MCF 10A (cell line): ENCODE measurements at regions of chr7 and their contacts with region 1.

Region 1: DNA sequence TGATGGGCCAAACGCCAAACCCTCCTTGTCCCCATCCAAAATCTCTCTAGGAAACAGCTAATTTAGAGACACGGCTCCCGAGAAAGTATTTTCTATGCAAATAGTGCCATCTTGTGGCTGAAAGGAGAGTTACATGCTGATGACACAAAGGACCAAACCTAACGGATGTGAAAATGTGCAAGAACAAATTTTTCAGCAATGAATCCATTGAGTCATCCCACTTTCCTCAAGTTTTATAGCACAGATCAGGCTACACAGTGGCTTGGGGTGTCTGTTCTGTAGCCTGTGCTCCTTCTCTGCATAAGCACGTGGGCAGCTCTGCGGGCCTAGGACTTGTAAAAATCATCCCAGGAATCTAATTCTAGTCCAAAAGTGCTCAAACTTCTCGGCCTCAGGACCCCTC is 154.8 kb upstream of the PRR15 start:
- DNase-seq: peak; percentile 83
- H3K4me3 Mint-ChIP-seq: no peak overlapping the region
- H3K27ac Mint-ChIP-seq: no peak overlapping the region
- H3K4me1 Mint-ChIP-seq: peaks cover 10% of the 10 kb centered on the region
- H3K27me3 Mint-ChIP-seq: no peaks in the 10 kb centered on the region
- CTCF ChIP-seq: peak; percentile 64

Region 2: DNA sequence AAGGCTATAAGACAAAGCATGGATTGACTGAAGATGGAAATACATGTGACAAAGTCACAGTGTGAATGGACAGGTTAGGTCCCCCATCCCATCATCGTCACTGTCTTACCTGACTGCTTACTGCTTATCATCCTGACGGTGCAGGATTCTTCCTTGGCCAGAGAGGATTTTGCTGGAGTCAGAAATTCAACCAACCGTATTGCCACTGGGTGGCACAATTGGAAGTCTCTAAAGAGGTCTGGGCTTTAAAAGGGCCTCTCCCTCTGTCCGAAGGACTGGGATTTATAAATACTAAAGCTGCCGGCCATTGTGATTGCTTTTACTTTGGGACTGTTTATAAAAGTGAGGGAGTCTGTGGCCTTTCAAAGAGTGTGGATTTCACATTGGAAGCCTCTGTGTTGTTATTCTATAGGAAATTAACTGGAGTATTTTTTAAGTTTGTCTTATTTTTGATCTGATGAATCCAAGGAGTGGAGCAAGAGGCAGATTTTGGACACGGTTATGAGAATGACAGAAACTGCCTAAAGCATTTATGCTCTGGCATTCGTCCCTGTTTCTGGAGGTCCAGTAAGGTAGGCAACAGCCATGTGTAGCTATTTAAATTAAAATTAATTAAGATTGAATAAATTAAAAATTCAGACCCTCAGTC is 1109.8 kb before region 1 on chr7:
- CTCF ChIA-PET with region 1: no interaction called
- POLR2A ChIA-PET with region 1: no interaction called
- intact Hi-C with region 1: loop called (anchors 5 kb)
- DNase-seq: peak; percentile 78
- H3K4me3 Mint-ChIP-seq: no peak overlapping the region
- H3K27ac Mint-ChIP-seq: no peak overlapping the region
- H3K4me1 Mint-ChIP-seq: peaks cover 9% of the 10 kb centered on the region
- H3K27me3 Mint-ChIP-seq: no peaks in the 10 kb centered on the region
- CTCF ChIP-seq: peak; percentile 48

Region 3: GRCh38 chr7:28926871-28927597 is 481.8 kb before region 1 on chr7:
- CTCF ChIA-PET with region 1: interaction called, 230 read pairs
- POLR2A ChIA-PET with region 1: interaction called, 10 read pairs
- intact Hi-C with region 1: loop called (anchors 1 kb)
- DNase-seq: peak; percentile 90
- H3K4me3 Mint-ChIP-seq: peak overlapping the region; percentile 86
- H3K27ac Mint-ChIP-seq: peak overlapping the region; percentile 55
- H3K4me1 Mint-ChIP-seq: peaks cover 7% of the 10 kb centered on the region
- H3K27me3 Mint-ChIP-seq: no peaks in the 10 kb centered on the region
- CTCF ChIP-seq: peak; percentile 68

Region 4: GRCh38 chr7:29113384-29114103 is 295.3 kb before region 1 on chr7:
- CTCF ChIA-PET with region 1: interaction called, 48 read pairs
- POLR2A ChIA-PET with region 1: interaction called, 7 read pairs
- intact Hi-C with region 1: loop called (anchors 1 kb)
- DNase-seq: peak; percentile 82
- H3K4me3 Mint-ChIP-seq: peak overlapping the region; percentile 68
- H3K27ac Mint-ChIP-seq: peak overlapping the region; percentile 84
- H3K4me1 Mint-ChIP-seq: peaks cover 51% of the 10 kb centered on the region
- H3K27me3 Mint-ChIP-seq: no peaks in the 10 kb centered on the region
- CTCF ChIP-seq: peak; percentile 40

Region 5: GRCh38 chr7:29163854-29164253 is 245.0 kb before region 1 on chr7:
- CTCF ChIA-PET with region 1: no interaction called
- POLR2A ChIA-PET with region 1: no interaction called
- intact Hi-C with region 1: no loop called
- DNase-seq: no peak
- H3K4me3 Mint-ChIP-seq: no peak overlapping the region
- H3K27ac Mint-ChIP-seq: no peak overlapping the region
- H3K4me1 Mint-ChIP-seq: no peaks in the 10 kb centered on the region
- H3K27me3 Mint-ChIP-seq: no peaks in the 10 kb centered on the region
- CTCF ChIP-seq: no peak

Region 6: DNA sequence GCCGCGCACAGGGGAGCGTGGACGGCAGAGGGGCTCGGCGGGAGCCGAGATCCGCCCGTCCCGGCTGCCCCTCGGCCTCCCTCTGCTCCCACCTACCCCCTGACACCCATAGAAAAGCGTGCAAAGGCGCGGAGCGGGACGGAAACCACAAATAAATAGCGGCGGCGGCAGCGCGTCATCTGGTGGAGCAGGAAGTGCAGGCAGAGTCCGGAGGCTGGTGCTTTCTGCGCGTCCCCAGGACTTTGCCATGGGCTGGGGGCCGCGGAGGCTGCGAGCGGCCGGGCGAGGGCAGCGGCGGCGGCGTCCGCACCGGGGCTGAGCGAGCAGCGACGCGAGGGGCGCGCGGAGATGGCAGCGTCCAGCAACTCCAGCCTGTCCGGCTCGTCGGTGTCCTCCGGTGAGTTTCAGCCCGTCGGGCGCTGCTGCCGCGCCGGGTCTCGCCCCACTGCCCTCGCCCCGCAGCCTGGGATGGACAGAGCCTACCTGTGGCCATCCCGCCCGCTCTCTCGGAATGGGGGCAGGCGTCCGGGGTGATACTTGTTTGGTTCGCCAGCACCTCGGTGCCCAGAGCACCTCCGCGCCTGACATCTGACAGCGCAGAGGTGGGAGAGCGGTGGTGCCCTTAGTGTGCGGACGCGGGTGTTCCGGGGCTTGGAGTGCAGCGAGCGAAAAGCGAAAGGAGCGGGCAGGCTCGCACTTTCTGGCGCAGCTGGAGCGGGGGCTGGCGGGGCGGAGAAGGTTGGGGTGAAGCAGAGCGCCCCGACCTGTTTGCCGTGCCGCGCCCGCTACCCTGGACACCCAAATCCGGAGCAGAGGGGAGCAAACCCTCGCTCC is 214.0 kb before region 1 on chr7 and contains the start of gene CHN2:
- CTCF ChIA-PET with region 1: interaction called, 140 read pairs
- POLR2A ChIA-PET with region 1: interaction called, 4 read pairs
- intact Hi-C with region 1: loop called (anchors 1 kb)
- DNase-seq: peak; percentile 55
- H3K4me3 Mint-ChIP-seq: peak within 1 kb of the TSS; percentile 75
- H3K27ac Mint-ChIP-seq: no peak within 1 kb of the TSS
- H3K4me1 Mint-ChIP-seq: no peaks in the 10 kb centered on the region
- H3K27me3 Mint-ChIP-seq: no peaks in the 10 kb centered on the region
- CTCF ChIP-seq: no peak
- total RNA-seq, gene CHN2: 5.1 and 8.0 TPM in 2 replicates

Region 7: GRCh38 chr7:29397398-29397797 is 11.4 kb before region 1 on chr7:
- CTCF ChIA-PET with region 1: interaction called, 15 read pairs
- POLR2A ChIA-PET with region 1: no interaction called
- intact Hi-C with region 1: no loop called
- DNase-seq: no peak
- H3K4me3 Mint-ChIP-seq: no peak overlapping the region
- H3K27ac Mint-ChIP-seq: no peak overlapping the region
- H3K4me1 Mint-ChIP-seq: no peaks in the 10 kb centered on the region
- H3K27me3 Mint-ChIP-seq: no peaks in the 10 kb centered on the region
- CTCF ChIP-seq: no peak

Region 8: DNA sequence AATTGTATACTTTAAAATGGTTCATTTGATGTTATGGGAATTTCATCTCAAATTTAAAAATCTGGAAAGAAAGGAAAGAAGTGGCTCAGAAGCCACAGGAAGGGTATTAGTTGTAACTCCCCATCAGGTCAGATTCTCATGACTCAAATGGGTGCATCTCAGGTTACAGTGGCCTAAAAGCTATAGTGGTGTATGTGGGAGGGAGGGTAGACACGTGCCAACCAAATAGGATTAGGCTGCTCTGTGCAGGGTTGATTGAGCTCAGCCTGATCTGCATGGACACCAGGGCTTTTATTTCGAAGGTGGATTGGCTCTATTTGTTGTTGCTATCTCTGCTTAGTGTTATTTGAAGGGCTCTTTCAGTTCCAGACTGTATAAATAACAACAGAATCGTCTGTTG is 33.3 kb after region 1 on chr7:
- CTCF ChIA-PET with region 1: no interaction called
- POLR2A ChIA-PET with region 1: no interaction called
- intact Hi-C with region 1: no loop called
- DNase-seq: peak; percentile 82
- H3K4me3 Mint-ChIP-seq: no peak overlapping the region
- H3K27ac Mint-ChIP-seq: no peak overlapping the region
- H3K4me1 Mint-ChIP-seq: peaks cover 9% of the 10 kb centered on the region
- H3K27me3 Mint-ChIP-seq: no peaks in the 10 kb centered on the region
- CTCF ChIP-seq: no peak

Region 9: DNA sequence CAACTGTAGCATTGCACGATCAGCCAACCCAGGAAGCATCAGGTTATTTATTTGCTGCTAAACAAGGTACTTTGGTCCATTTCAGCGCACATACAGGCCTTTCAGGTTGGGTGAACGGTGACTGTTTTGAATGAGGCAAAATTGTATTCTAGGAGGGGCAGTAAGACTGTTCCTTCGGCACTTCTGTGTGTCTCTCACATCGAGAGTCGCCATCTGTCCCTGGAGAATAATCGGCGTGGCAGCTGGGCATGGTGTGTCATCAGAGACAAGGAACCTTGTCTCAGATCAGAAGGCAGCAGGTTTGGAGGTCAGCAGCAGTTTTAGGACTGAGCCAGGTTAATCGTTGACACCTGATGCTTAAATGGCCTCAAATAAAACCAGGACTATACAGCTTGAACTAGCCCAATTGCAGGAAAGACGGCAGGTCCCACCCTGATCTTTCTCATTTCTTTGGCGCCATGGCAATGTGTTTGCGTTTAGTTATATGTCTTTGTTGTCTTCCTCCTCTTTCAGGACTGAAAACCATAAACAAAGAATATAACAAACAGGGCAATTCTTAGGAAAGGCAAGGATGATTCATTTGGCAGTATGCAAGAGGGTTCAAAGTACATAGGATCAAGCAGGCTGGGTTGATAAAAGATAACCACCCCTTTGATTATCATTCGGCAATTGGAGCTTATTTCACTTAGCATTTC is 62.7 kb after region 1 on chr7:
- CTCF ChIA-PET with region 1: no interaction called
- POLR2A ChIA-PET with region 1: no interaction called
- intact Hi-C with region 1: no loop called
- DNase-seq: no peak
- H3K4me3 Mint-ChIP-seq: no peak overlapping the region
- H3K27ac Mint-ChIP-seq: no peak overlapping the region
- H3K4me1 Mint-ChIP-seq: peaks cover 7% of the 10 kb centered on the region
- H3K27me3 Mint-ChIP-seq: no peaks in the 10 kb centered on the region
- CTCF ChIP-seq: no peak

Region 10: GRCh38 chr7:29609162-29610037 is 200.6 kb after region 1 on chr7:
- CTCF ChIA-PET with region 1: interaction called, 5 read pairs
- POLR2A ChIA-PET with region 1: interaction called, 3 read pairs
- intact Hi-C with region 1: loop called (anchors 2 kb)
- DNase-seq: peak; percentile 91
- H3K4me3 Mint-ChIP-seq: peak overlapping the region; percentile 2
- H3K27ac Mint-ChIP-seq: no peak overlapping the region
- H3K4me1 Mint-ChIP-seq: peaks cover 41% of the 10 kb centered on the region
- H3K27me3 Mint-ChIP-seq: no peaks in the 10 kb centered on the region
- CTCF ChIP-seq: peak; percentile 50